CD4-positive, alpha-beta memory T cell (primary cell): ENCODE measurements at regions of chr4 and their contacts with region 1.

Region 1: DNA sequence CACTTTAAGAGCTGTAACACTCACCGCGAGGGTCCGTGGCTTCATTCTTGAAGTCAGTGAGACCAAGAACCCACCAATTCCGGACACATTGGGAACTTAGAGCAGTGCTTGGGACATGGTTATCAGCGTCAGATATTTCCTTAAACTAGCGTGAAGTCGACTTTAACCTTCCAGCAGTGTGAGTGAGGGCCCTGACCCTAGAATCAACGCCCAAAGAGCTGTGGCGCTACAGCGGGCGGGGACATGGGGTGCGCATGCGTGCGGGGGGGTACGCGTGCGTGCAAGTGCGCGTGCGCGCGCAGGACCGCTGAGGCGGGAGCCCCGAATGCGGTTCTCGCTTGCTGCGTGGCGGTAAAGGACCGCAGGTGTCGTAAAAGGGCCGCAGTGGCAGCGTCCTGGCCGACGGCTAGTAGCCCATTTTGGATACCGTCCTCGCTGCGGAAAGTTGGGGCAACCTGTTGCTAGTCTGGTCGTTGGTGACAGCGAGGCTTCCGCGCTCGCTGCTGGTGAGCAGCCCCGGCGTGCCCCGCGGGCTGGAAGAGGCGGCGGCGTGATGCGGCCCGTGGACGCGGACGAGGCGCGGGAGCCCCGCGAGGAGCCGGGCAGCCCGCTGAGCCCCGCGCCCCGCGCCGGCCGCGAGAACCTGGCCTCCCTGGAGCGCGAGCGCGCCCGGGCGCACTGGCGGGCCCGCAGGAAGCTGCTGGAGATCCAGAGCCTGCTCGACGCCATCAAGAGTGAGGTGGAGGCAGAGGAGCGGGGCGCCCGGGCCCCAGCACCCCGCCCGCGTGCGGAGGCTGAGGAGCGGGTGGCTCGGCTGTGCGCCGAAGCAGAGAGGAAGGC is 19.8 kb upstream of the S100P start:
- DNase-seq: peak; percentile 94 to 96 (median 96)
- H3K4me3 ChIP-seq: peak overlapping the region; percentile 59 to 65
- H3K4me3 Mint-ChIP-seq: peak overlapping the region; percentile 92 to 99 (median 98)
- H3K27ac ChIP-seq: peak overlapping the region; percentile 71
- H3K27ac Mint-ChIP-seq: peak overlapping the region; percentile 95 to 99 (median 98)
- H3K4me1 ChIP-seq: peaks cover 36% of the 10 kb centered on the region
- H3K4me1 Mint-ChIP-seq: peaks cover 39 to 59% (median 49%) of the 10 kb centered on the region in 4 donors
- H3K27me3 ChIP-seq: no peaks in the 10 kb centered on the region
- H3K27me3 Mint-ChIP-seq: no peaks in the 10 kb centered on the region

Region 2: GRCh38 chr4:6549445-6549844 is 124.4 kb before region 1 on chr4:
- CTCF ChIA-PET with region 1: no interaction called
- POLR2A ChIA-PET with region 1: no interaction called
- intact Hi-C with region 1: no loop called
- DNase-seq: no peak
- H3K4me3 ChIP-seq: no peak overlapping the region
- H3K4me3 Mint-ChIP-seq: no peak overlapping the region
- H3K27ac ChIP-seq: no peak overlapping the region
- H3K27ac Mint-ChIP-seq: no peak overlapping the region
- H3K4me1 ChIP-seq: no peaks in the 10 kb centered on the region
- H3K4me1 Mint-ChIP-seq: peaks cover 0 to 5% (median 0%) of the 10 kb centered on the region in 4 donors
- H3K27me3 ChIP-seq: peaks cover 3% of the 10 kb centered on the region
- H3K27me3 Mint-ChIP-seq: peaks cover 25 to 41% of the 10 kb centered on the region in 2 donors

Region 3: GRCh38 chr4:6658597-6659075 is 15.2 kb before region 1 on chr4:
- CTCF ChIA-PET with region 1: interaction called, 10 read pairs
- POLR2A ChIA-PET with region 1: interaction called, 44 read pairs
- intact Hi-C with region 1: no loop called
- DNase-seq: peak; percentile 59 to 74 (median 60)
- H3K4me3 ChIP-seq: peak overlapping the region in 1 of 2 donors; percentile 42
- H3K4me3 Mint-ChIP-seq: peak overlapping the region; percentile 67 to 79 (median 76)
- H3K27ac ChIP-seq: peak overlapping the region; percentile 37
- H3K27ac Mint-ChIP-seq: peak overlapping the region in 4 of 7 donors; percentile 53 to 83 (median 74)
- H3K4me1 ChIP-seq: peaks cover 13% of the 10 kb centered on the region
- H3K4me1 Mint-ChIP-seq: peaks cover 0 to 23% (median 9%) of the 10 kb centered on the region in 4 donors
- H3K27me3 ChIP-seq: no peaks in the 10 kb centered on the region
- H3K27me3 Mint-ChIP-seq: no peaks in the 10 kb centered on the region

Region 4: GRCh38 chr4:6688879-6689505 is 15.1 kb after region 1 on chr4:
- CTCF ChIA-PET with region 1: interaction called, 155 read pairs
- POLR2A ChIA-PET with region 1: interaction called, 1,401 read pairs
- intact Hi-C with region 1: loop called (anchors 1 kb)
- DNase-seq: peak; percentile 60 to 92 (median 64)
- H3K4me3 ChIP-seq: peak overlapping the region; percentile 18 to 55
- H3K4me3 Mint-ChIP-seq: peak overlapping the region; percentile 87 to 97 (median 93)
- H3K27ac ChIP-seq: peak overlapping the region; percentile 62
- H3K27ac Mint-ChIP-seq: peak overlapping the region; percentile 89 to 99 (median 97)
- H3K4me1 ChIP-seq: peaks cover 73% of the 10 kb centered on the region
- H3K4me1 Mint-ChIP-seq: peaks cover 55 to 88% (median 72%) of the 10 kb centered on the region in 4 donors
- H3K27me3 ChIP-seq: no peaks in the 10 kb centered on the region
- H3K27me3 Mint-ChIP-seq: no peaks in the 10 kb centered on the region

Region 5: GRCh38 chr4:6701371-6701770 is 27.5 kb after region 1 on chr4:
- CTCF ChIA-PET with region 1: interaction called, 189 read pairs
- POLR2A ChIA-PET with region 1: interaction called, 1,401 read pairs
- intact Hi-C with region 1: loop called (anchors 1 kb)
- DNase-seq: peak in 3 of 5 donors; percentile 36 to 47 (median 40)
- H3K4me3 ChIP-seq: no peak overlapping the region
- H3K4me3 Mint-ChIP-seq: no peak overlapping the region
- H3K27ac ChIP-seq: no peak overlapping the region
- H3K27ac Mint-ChIP-seq: peak overlapping the region in 4 of 7 donors; percentile 19 to 84 (median 44)
- H3K4me1 ChIP-seq: peaks cover 73% of the 10 kb centered on the region
- H3K4me1 Mint-ChIP-seq: peaks cover 56 to 80% (median 69%) of the 10 kb centered on the region in 4 donors
- H3K27me3 ChIP-seq: no peaks in the 10 kb centered on the region
- H3K27me3 Mint-ChIP-seq: no peaks in the 10 kb centered on the region

Region 6: DNA sequence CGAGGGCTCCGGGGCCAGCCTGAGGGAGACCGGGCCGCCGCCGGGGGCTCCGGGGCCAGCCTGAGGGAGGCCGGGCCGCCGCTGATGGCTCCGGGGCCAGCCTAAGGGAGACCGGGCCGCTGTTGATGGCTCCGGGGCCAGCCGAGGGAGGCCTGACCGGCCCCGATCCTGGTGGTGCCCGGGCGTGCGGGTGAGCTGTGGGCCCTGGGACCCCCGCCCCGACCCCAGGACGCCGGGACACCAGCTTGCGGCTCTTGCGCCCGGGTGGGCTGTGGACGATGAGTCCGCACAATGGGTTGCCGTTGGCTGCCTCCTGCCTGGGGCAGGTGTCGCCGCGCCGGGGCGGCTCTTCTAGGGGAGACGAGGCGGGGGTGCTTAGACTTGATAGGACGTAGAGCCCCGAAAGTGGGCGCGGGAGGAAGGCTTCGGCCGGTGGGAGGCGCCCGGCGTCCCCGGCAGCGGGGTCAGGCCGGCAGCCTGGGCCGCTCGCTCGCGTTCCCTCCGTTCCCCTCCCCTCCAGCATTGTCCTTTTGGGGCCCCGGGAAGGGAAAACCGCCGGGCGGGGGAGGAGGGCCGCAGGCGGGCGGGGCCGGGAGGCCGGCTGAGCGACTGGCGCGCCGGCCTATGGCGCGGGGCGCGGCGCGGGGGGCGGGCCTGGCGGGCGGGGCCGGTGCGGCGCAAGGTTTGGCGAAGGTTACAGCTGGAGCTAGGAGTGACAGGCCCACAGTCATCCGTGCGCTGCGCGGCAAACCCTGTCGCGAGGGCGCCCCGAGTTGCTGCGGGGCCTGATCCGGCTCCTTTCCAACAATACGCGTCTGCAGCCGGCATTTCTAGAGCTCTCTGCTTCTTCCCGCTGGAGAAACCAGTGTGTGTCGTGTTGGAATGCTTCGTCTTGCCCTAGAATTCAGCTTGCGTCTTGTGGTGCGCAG is 109.4 kb after region 1 on chr4:
- CTCF ChIA-PET with region 1: interaction called, 4 read pairs
- POLR2A ChIA-PET with region 1: interaction called, 17 read pairs
- intact Hi-C with region 1: loop called (anchors 1 kb)
- DNase-seq: peak; percentile 87 to 89 (median 88)
- H3K4me3 ChIP-seq: peak overlapping the region; percentile 38 to 71
- H3K4me3 Mint-ChIP-seq: peak overlapping the region; percentile 84 to 92 (median 88)
- H3K27ac ChIP-seq: peak overlapping the region; percentile 96
- H3K27ac Mint-ChIP-seq: peak overlapping the region; percentile 88 to 93 (median 91)
- H3K4me1 ChIP-seq: peaks cover 44% of the 10 kb centered on the region
- H3K4me1 Mint-ChIP-seq: peaks cover 32 to 61% (median 47%) of the 10 kb centered on the region in 4 donors
- H3K27me3 ChIP-seq: no peaks in the 10 kb centered on the region
- H3K27me3 Mint-ChIP-seq: no peaks in the 10 kb centered on the region